ENCODE measurements at regions of chr14 and their contacts with region 1.

Region 1: DNA sequence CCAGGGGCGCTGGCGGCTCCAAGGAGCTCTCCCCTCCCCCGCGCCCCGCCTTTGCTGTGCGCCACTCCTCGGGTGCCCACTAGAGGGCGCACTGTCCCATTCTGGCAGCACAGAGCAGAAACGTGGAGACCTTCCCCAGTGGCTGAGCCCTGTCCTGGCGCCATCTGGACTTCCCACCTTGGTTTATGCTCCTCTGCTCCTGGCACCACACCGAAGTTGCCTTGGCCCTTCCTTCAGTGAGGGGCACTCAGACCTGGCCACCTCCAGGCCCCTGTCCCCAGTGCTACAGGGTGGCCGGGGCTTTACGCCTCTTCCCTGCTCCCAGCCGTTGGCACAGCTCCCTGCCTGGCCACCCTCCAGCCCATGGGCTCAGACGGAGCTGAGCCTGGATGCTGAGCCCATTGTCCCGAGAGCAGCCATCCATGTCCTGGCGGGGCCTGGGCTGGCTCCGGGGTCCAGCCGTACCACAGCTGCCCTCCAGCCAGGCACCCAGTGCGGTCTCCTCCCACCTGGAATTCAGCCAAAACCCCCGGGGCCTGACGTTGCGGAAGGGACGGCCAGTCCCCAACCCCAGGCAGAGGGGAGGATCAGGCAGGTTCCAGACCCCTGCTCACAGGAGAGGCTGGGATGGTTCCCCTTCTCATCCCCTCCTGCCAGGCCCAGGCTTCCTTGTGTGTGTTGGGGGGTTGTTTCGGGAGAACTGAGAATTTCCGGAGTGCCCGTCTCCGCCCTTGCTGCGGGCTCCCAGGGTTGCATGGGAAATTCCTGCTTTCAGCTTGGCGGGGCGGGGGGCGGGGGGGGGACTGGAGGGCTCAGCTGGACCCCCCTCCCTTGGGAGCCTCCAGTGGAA is 5.5 kb upstream of the CRIP1 start:
- DNase-seq: peak; percentile 91
- H3K4me3 Mint-ChIP-seq: peak overlapping the region; percentile 47
- H3K27ac Mint-ChIP-seq: peak overlapping the region; percentile 92
- H3K4me1 Mint-ChIP-seq: peaks cover 51% of the 10 kb centered on the region
- H3K27me3 Mint-ChIP-seq: peaks cover 24% of the 10 kb centered on the region

Region 2: GRCh38 chr14:105375635-105376057 is 105.5 kb before region 1 on chr14:
- CTCF ChIA-PET with region 1: interaction called, 30 read pairs
- POLR2A ChIA-PET with region 1: interaction called, 3 read pairs
- DNase-seq: peak; percentile 59
- H3K4me3 Mint-ChIP-seq: no peak overlapping the region
- H3K27ac Mint-ChIP-seq: peak overlapping the region; percentile 94
- H3K4me1 Mint-ChIP-seq: peaks cover 31% of the 10 kb centered on the region
- H3K27me3 Mint-ChIP-seq: no peaks in the 10 kb centered on the region

Region 3: GRCh38 chr14:105398044-105398725 is 83.0 kb before region 1 on chr14 and contains the start of gene TEX22:
- CTCF ChIA-PET with region 1: interaction called, 7 read pairs
- POLR2A ChIA-PET with region 1: interaction called, 10 read pairs
- DNase-seq: peak; percentile 89
- H3K4me3 Mint-ChIP-seq: peak within 1 kb of the TSS; percentile 89
- H3K27ac Mint-ChIP-seq: peak within 1 kb of the TSS; percentile 82
- H3K4me1 Mint-ChIP-seq: peaks cover 23% of the 10 kb centered on the region
- H3K27me3 Mint-ChIP-seq: no peaks in the 10 kb centered on the region
- total RNA-seq, gene TEX22: 2.6 to 4.4 TPM

Region 4: DNA sequence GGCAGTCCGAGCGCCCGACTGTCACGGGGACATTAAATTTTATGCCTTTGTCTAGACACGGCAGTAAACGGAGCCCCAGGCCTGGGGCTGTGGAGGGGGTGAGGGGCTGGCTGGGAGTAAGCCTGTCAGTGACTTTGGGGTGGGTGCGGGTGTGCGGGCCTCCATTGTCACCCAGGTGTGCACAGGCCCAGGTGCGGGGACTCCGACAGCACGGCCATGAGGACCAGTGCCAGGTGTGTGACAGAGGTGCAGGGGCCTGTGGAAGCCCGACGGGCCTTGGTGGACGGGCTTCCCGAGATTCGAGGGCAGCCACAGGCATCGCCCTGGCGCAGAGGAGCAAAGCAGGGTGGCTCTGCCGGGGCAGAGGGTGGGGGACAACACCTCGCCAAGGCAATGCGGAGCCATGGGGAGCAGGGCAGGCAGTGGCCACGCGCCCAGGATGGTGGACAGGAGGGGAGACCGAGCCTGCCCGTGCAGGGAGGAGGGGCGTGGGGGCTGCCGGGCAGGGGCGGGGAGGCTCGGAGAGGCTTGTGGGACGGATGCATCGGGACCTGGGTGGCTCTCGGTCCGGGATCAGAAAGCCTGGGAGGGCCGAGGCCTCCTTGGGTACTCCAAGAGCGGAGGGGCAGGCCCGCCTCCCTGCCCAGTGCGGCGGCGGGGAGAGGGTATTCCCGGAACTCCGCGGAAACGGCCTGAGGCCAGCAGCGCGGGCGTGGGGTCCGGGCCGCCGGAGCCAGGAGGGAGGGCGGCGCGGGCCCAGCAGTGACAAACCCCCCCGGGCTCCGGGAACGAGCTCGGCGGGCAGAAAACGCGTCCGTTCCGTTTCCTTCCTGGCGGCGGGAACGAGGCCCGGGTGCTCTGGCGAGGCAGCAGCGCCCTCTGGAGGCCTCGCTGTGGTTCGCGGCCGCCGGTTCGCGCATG is 46.7 kb after region 1 on chr14:
- CTCF ChIA-PET with region 1: interaction called, 4 read pairs
- POLR2A ChIA-PET with region 1: interaction called, 13 read pairs
- DNase-seq: peak; percentile 84
- H3K4me3 Mint-ChIP-seq: peak overlapping the region; percentile 68
- H3K27ac Mint-ChIP-seq: no peak overlapping the region
- H3K4me1 Mint-ChIP-seq: peaks cover 39% of the 10 kb centered on the region
- H3K27me3 Mint-ChIP-seq: peaks cover 24% of the 10 kb centered on the region